SK-N-SH (cell line): ENCODE measurements at regions of chr9 and their contacts with region 1.

Region 1: GRCh38 chr9:25964239-25964638 is 286.0 kb upstream of the TUSC1 start:
- DNase-seq: peak; percentile 52
- H3K4me3 ChIP-seq: no peak overlapping the region; a peak in 1 of 4 replicates
- H3K27ac ChIP-seq: no peak overlapping the region
- H3K4me1 ChIP-seq: no peaks in the 10 kb centered on the region
- H3K27me3 ChIP-seq: no peaks in the 10 kb centered on the region
- CTCF ChIP-seq: peak; percentile 70
- EP300 ChIP-seq: no peak
- RAD21 ChIP-seq: peak; percentile 87

Region 2: DNA sequence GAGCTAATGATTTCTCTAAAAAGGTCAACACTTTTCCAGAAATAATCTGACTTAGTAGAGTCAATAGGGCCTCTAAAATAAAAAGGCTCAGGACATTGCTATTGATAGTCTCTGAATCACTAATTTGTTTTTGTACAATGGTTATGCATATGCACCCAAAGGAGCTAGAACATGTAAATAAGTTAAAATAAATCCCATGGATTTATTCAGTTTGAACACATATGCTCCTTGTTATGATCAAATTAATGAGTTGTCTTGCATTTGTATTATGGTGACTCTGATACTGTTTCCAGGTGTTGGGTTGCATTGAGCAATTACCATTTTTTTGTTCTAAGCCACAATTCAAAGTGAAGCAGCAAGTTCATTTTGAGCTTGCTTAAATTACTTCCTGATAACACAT is 10.0 kb before region 1 on chr9:
- CTCF ChIA-PET with region 1: interaction called, 11 read pairs
- POLR2A ChIA-PET with region 1: no interaction called
- DNase-seq: no peak
- H3K4me3 ChIP-seq: no peak overlapping the region
- H3K27ac ChIP-seq: no peak overlapping the region
- H3K4me1 ChIP-seq: no peaks in the 10 kb centered on the region
- H3K27me3 ChIP-seq: no peaks in the 10 kb centered on the region
- CTCF ChIP-seq: no peak
- EP300 ChIP-seq: no peak
- RAD21 ChIP-seq: no peak

Region 3: GRCh38 chr9:25994605-25995004 is 30.4 kb after region 1 on chr9:
- CTCF ChIA-PET with region 1: no interaction called
- POLR2A ChIA-PET with region 1: no interaction called
- DNase-seq: no peak
- H3K4me3 ChIP-seq: no peak overlapping the region
- H3K27ac ChIP-seq: no peak overlapping the region
- H3K4me1 ChIP-seq: no peaks in the 10 kb centered on the region
- H3K27me3 ChIP-seq: no peaks in the 10 kb centered on the region
- CTCF ChIP-seq: no peak
- EP300 ChIP-seq: no peak
- RAD21 ChIP-seq: no peak

Region 4: GRCh38 chr9:26656003-26656870 is 692.0 kb after region 1 on chr9:
- CTCF ChIA-PET with region 1: interaction called, 13 read pairs
- POLR2A ChIA-PET with region 1: no interaction called
- DNase-seq: peak; percentile 61
- H3K4me3 ChIP-seq: peak overlapping the region in 1 of 2 experiments; percentile 13; a peak in 1 of 4 replicates
- H3K27ac ChIP-seq: no peak overlapping the region
- H3K4me1 ChIP-seq: peaks cover 0 to 3% of the 10 kb centered on the region in 2 experiments; a peak in 2 of 4 replicates
- H3K27me3 ChIP-seq: no peaks in the 10 kb centered on the region
- CTCF ChIP-seq: peak; percentile 60
- EP300 ChIP-seq: no peak
- RAD21 ChIP-seq: peak; percentile 73